Activated T-helper 2 cell treated with anti-CD3 and anti-CD28 coated beads, Interferon-gamma antibody, Interleukin-2, Interleukin-4, amounts not matched to agents 10 μg/mL and 5 μg/mL and 100 μg/mL, durations not matched to agents 14 hours and 24 hours and 36 hours (primary cell): ENCODE measurements at regions of chr3 and their contacts with region 1.

Region 1: DNA sequence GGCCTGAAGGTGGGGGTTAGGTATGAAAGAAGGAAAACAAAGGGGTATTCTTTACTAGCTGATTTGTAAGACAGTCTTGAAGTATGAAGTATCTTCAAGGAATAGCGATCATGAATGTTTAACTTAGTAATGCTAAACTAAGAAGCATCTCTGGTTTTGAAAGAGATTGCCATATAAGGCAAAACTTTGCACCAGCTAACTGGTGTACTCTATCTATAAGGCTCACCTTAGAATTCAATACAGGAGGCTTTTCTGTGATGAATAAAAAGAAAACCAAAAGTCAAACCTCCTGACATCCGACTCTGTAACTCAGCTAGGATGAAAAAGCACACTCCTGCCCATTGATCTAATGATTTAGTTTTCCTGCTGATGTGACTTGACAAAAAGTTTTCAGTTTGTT is 54.7 kb downstream of the FOXP1 start:
- DNase-seq: no peak
- H3K4me3 Mint-ChIP-seq: no peak overlapping the region
- H3K27ac Mint-ChIP-seq: peak overlapping the region; percentile 52
- H3K4me1 Mint-ChIP-seq: peaks cover 36% of the 10 kb centered on the region
- H3K27me3 Mint-ChIP-seq: no peaks in the 10 kb centered on the region

Region 2: GRCh38 chr3:71563827-71564226 is 35.0 kb after region 1 on chr3:
- intact Hi-C with region 1: loop called (anchors 5 kb)
- DNase-seq: no peak
- H3K4me3 Mint-ChIP-seq: no peak overlapping the region
- H3K27ac Mint-ChIP-seq: no peak overlapping the region
- H3K4me1 Mint-ChIP-seq: peaks cover 7% of the 10 kb centered on the region
- H3K27me3 Mint-ChIP-seq: no peaks in the 10 kb centered on the region

Region 3: DNA sequence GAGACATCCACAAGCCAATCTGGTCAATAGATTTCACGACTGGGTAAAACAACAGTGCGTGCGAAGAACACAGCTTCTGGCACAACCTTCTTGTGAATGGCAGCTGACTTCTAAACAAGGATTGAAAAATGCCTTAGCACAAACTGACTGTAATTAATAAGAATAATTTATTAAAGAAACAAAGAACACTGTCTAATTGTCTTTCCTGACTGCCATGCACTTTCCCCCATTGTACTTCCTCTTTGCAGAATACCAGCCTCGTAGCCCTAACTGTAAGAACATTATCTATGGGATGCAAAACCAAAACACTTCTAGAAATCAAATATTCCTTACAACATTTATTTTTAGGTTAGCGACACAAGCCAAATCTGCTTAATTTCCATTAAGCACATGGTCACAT is 48.2 kb after region 1 on chr3:
- intact Hi-C with region 1: no loop called
- DNase-seq: no peak
- H3K4me3 Mint-ChIP-seq: no peak overlapping the region
- H3K27ac Mint-ChIP-seq: no peak overlapping the region
- H3K4me1 Mint-ChIP-seq: peaks cover 39% of the 10 kb centered on the region
- H3K27me3 Mint-ChIP-seq: no peaks in the 10 kb centered on the region

Region 4: DNA sequence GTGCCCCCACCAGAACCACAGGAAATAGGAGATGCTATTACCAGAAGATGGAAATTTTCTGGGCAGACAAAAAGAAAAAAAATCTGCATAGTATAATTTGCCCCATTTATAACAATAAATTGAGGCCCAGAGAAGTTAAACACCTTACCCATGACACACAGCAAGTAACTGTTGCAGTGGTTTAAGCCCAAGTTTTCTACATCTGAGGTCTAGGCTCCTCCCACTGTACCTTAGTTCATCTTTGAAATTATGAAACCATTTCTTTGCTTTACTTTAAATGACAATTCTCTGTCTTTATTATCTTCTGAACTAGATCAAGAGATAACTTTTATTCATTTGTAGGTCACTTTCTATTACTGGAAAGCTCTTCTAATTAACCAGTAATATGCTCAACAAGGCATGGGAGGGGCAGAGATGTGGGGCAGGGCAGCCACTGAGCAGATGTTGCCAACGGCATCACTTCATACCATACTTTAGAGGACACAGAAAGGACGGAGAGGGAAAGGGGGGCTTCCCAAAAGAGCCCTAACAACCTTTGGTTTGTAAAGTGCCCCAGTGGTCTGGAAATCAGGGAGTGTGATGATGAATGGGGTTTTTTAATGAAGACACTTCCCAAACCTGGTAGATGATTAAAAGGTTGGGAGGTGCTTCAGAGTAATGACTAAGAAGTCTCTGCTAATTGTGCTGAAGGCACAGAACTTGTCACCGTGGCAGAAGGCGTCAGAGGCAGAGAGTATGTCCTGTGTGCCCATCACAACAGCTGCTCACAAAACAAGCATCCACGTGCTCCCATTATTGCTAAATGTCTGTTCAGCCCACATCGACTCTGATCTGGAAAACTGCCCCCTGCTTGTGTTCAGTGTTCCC is 977.0 kb after region 1 on chr3:
- intact Hi-C with region 1: no loop called
- DNase-seq: no peak
- H3K4me3 Mint-ChIP-seq: no peak overlapping the region
- H3K27ac Mint-ChIP-seq: peak overlapping the region; percentile 21
- H3K4me1 Mint-ChIP-seq: peaks cover 8% of the 10 kb centered on the region
- H3K27me3 Mint-ChIP-seq: no peaks in the 10 kb centered on the region